HEK293 (cell line): ENCODE measurements at regions of chr15 and their contacts with region 1.

Region 1: GRCh38 chr15:74307827-74308644 is 59.4 kb downstream of the CYP11A1 start:
- H3K4me3 ChIP-seq: no peak overlapping the region
- H3K27ac ChIP-seq: no peak overlapping the region
- H3K4me1 ChIP-seq: peaks cover 10% of the 10 kb centered on the region
- CTCF ChIP-seq: peak; percentile 55

Region 2: GRCh38 chr15:74036271-74037170 is 271.5 kb before region 1 on chr15:
- CTCF ChIA-PET with region 1: interaction called, 12 read pairs
- POLR2A ChIA-PET with region 1: no interaction called
- H3K4me3 ChIP-seq: no peak overlapping the region
- H3K27ac ChIP-seq: no peak overlapping the region
- H3K4me1 ChIP-seq: no peaks in the 10 kb centered on the region; the same call in 1 of the 2 replicates
- CTCF ChIP-seq: no peak; the same call in 1 of the 2 replicates

Region 3: GRCh38 chr15:74053941-74054529 is 254.0 kb before region 1 on chr15:
- CTCF ChIA-PET with region 1: interaction called, 54 read pairs
- POLR2A ChIA-PET with region 1: no interaction called
- H3K4me3 ChIP-seq: no peak overlapping the region
- H3K27ac ChIP-seq: no peak overlapping the region
- H3K4me1 ChIP-seq: no peaks in the 10 kb centered on the region
- CTCF ChIP-seq: no peak

Region 4: DNA sequence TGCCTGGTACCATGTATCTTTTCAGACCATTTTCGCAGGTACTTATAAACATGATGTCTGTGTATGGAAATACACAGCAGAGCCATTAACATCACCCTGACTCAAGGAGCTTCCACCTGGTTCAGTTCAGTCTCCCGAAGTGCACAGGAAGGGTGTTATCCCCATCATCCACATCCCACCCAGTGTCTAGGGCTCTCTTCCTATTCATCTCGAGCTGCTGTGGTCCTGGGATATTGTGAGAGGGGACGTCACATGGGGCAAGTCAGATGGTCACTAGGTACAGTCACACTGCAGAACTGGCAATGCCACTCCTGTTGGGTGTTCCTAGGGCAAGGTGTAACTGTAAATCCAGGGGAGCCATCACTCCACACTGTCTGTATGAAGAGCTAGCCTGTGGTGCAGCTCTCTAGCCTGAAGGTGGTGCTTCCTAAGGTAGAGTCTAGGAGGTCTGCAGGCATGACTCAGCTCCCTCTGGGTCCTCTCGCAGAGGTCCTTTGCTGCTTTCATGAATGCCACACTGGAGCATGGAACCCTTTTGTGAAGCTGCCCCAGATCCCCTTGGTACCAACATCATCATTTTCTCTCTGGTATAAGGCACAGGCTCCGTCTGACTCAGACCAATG is 163.8 kb before region 1 on chr15:
- CTCF ChIA-PET with region 1: interaction called, 18 read pairs
- POLR2A ChIA-PET with region 1: no interaction called
- H3K4me3 ChIP-seq: no peak overlapping the region
- H3K27ac ChIP-seq: no peak overlapping the region
- H3K4me1 ChIP-seq: no peaks in the 10 kb centered on the region
- CTCF ChIP-seq: no peak

Region 5: DNA sequence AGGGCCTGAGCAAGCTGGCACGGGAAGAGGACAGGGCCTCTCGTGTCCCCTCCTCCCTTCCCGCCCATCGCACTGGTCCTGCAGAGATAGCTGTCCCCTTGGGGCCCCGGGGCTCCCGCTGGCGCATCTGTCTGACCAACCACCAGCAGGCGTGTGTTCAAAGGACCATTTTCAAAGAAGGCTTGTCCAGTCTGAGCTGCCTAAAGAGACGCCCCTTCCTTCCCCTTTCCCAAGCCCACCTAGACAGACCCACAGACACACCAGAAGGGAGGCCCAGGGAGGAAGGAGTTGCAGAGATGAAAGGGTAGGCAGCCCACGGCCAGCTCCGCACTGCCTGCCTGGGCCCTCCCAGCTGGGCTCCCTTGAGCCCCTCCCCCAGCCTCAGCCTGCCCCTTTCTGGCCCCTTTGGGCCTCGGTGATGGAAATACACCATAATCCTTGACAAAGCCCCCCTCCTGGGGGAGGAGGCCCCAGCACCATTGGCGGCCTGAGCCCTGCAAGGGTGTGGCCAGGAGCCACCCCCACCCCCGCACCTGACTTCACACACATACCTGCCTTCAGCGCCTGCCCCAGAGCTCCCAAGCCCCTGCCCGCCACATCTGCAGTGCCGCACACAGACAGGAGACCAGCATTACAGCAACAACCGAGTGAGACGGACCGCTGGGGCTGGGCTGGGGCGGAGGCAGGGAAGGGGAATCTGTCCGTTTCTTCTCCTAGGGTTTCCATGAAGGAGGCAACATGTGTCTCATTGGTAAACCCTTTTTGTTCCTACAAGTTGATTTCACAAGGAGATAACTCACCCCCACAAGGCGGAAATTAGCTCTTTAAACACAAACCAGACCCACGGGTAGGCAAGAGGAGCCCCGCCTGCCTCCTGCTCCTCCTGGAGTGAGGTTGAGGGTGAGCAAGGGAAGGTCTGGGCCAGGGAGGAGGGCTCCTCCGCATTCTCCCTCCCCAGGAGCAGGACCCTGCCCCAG is 105.3 kb before region 1 on chr15 and contains the start of gene STRA6:
- CTCF ChIA-PET with region 1: interaction called, 38 read pairs
- POLR2A ChIA-PET with region 1: no interaction called
- H3K4me3 ChIP-seq: no peak within 1 kb of the TSS
- H3K27ac ChIP-seq: peak within 1 kb of the TSS; percentile 78
- H3K4me1 ChIP-seq: peaks cover 42% of the 10 kb centered on the region
- CTCF ChIP-seq: no peak

Region 6: DNA sequence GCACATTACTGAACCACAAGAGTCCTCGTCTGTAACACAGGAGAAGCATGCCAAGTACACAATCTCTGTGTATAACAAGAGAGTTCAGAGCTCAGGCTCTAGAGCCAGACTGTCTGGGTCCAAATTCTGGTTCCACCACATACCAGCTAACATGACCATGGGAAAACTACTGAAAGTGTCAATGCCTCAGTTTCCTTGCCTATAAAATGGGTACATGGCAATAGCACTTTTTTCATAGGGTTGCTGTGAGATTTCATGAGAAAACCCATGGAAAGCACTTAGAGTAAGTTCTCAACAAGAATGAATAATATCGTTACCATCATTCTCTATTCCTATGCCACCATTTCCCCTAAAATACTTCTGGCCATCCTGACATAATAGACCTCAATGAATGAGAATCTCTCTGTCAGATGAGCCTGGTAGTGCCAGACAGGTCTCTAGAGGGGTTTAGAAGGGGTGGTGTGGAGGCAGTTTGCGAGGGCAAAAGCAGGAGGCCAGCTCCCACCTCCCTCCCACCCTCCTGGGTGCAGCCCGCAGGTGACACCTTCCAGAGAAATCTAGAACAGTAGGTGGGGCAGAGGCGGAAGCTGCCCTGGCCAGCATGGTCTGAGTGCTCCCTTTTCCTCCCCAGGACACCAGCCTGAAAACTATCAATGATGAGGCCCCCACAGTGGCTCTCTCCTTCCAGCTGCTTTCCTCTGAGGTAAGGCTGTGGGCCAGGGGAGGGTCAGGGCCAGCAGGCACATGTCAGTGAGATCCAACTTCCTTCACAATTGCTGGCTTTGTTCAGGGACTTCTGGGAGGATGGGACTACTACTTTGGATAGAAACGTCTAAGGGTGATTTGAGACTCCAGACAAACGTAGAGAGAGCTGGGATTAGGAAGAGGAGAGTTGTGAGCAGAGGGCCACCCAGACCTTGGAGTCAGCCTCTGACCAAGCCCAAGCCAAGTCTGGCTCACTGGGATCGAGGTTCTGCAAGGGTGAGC is 26.6 kb before region 1 on chr15:
- CTCF ChIA-PET with region 1: interaction called, 12 read pairs
- POLR2A ChIA-PET with region 1: no interaction called
- H3K4me3 ChIP-seq: no peak overlapping the region
- H3K27ac ChIP-seq: no peak overlapping the region
- H3K4me1 ChIP-seq: no peaks in the 10 kb centered on the region
- CTCF ChIP-seq: no peak

Region 7: DNA sequence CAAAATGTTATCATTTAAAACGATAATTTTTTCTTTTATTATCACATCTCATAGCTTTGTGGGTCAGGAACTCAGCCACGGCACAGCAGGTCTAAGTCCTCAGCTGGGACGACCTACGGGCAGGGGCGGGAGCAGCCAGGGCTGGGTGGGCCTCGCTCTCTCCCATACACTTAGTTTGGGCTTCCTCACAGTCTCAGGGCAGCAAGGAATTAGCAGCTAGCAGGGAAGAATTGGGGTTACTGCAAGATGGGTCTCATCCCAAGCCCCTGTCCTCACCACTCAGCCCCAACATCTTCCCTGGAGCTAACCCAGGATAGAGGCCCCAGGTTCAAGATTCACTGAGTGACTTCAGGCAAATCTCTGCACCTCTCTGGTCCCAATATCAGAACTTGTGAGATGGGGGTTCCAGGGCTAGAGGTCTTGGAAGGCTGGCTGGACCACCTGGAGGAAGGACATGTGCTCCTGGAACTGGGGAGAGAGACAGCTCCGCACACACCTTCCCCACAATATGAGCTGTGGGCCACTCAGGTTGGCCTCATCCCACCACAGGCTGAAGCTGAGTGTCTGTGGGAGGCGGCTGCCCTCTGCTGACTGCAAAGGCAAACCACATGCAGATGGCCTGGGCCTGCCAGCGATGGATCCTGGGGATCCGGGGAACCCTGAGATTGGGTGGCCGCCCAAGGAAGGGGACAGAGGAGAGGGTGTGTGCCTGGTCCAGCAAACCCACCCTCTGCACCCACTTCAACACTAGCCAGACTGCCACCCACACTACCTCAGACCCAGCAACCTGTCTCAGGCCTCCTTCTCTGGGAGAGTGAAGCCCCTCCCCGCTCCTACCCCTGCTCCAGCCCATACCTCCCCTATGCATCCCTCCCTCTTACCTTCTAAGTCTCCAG is 14.4 kb after region 1 on chr15:
- CTCF ChIA-PET with region 1: interaction called, 253 read pairs
- POLR2A ChIA-PET with region 1: no interaction called
- H3K4me3 ChIP-seq: no peak overlapping the region
- H3K27ac ChIP-seq: no peak overlapping the region
- H3K4me1 ChIP-seq: peaks cover 7% of the 10 kb centered on the region
- CTCF ChIP-seq: peak; percentile 96

Region 8: DNA sequence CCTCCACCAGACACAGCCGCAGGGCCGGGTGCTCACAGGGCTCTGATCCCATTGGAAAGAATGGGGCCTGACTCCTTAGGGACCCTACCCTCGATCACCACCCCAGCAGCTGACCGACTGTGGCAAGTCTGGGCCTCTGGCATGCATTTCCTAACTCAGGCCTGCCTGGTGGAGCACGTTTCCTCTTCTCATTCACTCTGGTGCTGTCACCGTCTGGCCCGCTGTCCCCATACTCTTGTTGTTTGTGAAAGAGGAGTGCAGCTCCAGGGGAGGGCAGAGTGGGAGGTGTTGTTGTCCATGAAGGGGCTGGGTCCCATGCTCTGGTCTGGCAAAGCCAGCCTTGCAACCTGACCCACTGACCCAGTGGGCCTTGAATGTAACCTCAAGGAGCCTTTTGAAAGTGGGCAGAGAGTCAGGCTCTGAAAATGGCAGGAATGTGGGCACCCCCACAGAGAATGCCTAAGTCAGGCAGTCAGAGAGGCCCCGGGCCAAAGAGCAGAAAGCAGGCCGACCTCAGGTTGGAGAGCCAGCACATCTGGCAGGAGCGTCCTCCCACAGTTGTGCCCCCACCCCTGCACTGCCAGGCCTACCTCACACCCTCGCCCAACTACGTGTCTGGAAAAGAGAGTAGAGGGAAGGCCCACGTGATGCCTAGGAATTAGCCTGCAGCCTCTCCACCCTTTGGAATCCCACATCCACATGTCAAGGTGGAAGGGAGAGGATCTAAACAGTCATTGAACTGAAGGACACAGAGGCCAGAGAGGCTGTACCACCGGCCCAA is 114.8 kb after region 1 on chr15:
- CTCF ChIA-PET with region 1: no interaction called
- POLR2A ChIA-PET with region 1: no interaction called
- H3K4me3 ChIP-seq: no peak overlapping the region
- H3K27ac ChIP-seq: no peak overlapping the region
- H3K4me1 ChIP-seq: no peaks in the 10 kb centered on the region
- CTCF ChIP-seq: no peak